ENCODE measurements at regions of chr3 and their contacts with region 1.

Region 1: GRCh38 chr3:160427832-160428424 is 21.7 kb downstream of the TRIM59 start:
- DNase-seq: no peak
- H3K4me3 Mint-ChIP-seq: no peak overlapping the region
- H3K27ac Mint-ChIP-seq: no peak overlapping the region
- H3K4me1 Mint-ChIP-seq: peaks cover 11% of the 10 kb centered on the region
- H3K27me3 Mint-ChIP-seq: no peaks in the 10 kb centered on the region

Region 2: GRCh38 chr3:159634483-159634882 is 793.4 kb before region 1 on chr3:
- intact Hi-C with region 1: no loop called
- DNase-seq: no peak
- H3K4me3 Mint-ChIP-seq: no peak overlapping the region
- H3K27ac Mint-ChIP-seq: no peak overlapping the region
- H3K4me1 Mint-ChIP-seq: no peaks in the 10 kb centered on the region
- H3K27me3 Mint-ChIP-seq: no peaks in the 10 kb centered on the region

Region 3: DNA sequence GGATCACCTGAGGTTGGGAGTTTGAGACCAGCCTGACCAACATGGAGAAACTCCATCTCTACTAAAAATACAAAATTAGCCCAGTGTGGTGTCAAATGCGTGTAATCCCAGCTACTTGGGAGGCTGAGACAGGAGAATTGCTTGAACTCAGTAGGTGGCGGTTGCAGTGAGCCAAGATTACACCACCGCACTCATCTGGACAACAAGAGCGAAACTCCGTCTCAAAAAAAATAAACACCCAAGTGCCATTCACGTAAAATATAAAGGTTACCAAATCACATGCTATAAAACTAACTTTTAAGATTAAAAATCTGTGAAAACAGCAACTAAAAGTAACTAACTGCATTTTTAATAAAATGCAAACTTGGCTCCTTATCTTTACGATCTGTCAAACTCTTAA is 12.8 kb after region 1 on chr3:
- intact Hi-C with region 1: loop called (anchors 2 kb)
- DNase-seq: no peak
- H3K4me3 Mint-ChIP-seq: no peak overlapping the region
- H3K27ac Mint-ChIP-seq: no peak overlapping the region
- H3K4me1 Mint-ChIP-seq: peaks cover 53% of the 10 kb centered on the region
- H3K27me3 Mint-ChIP-seq: no peaks in the 10 kb centered on the region

Region 4: DNA sequence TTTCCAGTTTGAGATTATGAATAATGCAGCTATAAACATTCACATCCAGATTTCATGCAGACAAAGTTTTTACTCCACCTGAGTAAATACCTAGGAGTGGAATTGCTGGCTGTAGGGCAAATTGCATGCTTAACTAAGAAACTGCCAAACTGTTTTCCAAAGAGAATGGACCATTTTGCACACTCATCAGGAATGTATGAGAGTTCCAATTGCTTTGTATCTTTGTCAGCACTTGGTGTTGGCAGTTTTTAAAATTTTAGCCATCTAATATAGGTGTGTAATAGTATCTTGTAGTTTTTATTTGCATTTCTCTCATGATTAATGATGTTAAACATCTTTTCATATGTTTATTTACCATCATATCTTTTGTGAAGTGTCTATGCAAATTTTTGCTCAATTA is 62.2 kb after region 1 on chr3:
- intact Hi-C with region 1: no loop called
- DNase-seq: peak; percentile 26
- H3K4me3 Mint-ChIP-seq: no peak overlapping the region
- H3K27ac Mint-ChIP-seq: no peak overlapping the region
- H3K4me1 Mint-ChIP-seq: peaks cover 5% of the 10 kb centered on the region
- H3K27me3 Mint-ChIP-seq: peaks cover 1% of the 10 kb centered on the region